PC-9 (cell line): ENCODE measurements at regions of chr3 and their contacts with region 1.

Region 1: GRCh38 chr3:97882975-97883598 is 61.3 kb downstream of the CRYBG3 start:
- DNase-seq: peak; percentile 74 to 91
- H3K4me3 ChIP-seq: peak overlapping the region; percentile 20; the same call in 1 of the 2 replicates
- H3K27ac ChIP-seq: peak overlapping the region; percentile 64
- H3K4me1 ChIP-seq: peaks cover 24% of the 10 kb centered on the region
- H3K27me3 ChIP-seq: no peaks in the 10 kb centered on the region
- CTCF ChIP-seq: no peak

Region 2: GRCh38 chr3:97863031-97863430 is 20.1 kb before region 1 on chr3:
- CTCF ChIA-PET with region 1: no interaction called
- POLR2A ChIA-PET with region 1: no interaction called
- intact Hi-C with region 1: loop called (anchors 2 kb)
- DNase-seq: peak; percentile 24 to 93
- H3K4me3 ChIP-seq: no peak overlapping the region
- H3K27ac ChIP-seq: peak overlapping the region; percentile 32
- H3K4me1 ChIP-seq: peaks cover 18% of the 10 kb centered on the region
- H3K27me3 ChIP-seq: no peaks in the 10 kb centered on the region
- CTCF ChIP-seq: no peak

Region 3: GRCh38 chr3:97871801-97872524 is 11.1 kb before region 1 on chr3:
- CTCF ChIA-PET with region 1: no interaction called
- POLR2A ChIA-PET with region 1: no interaction called
- intact Hi-C with region 1: loop called (anchors 1 kb)
- DNase-seq: peak; percentile 53 to 90
- H3K4me3 ChIP-seq: no peak overlapping the region
- H3K27ac ChIP-seq: 0 out of 2 replicates have a peak overlapping the region, but pooled peaks have one; percentile 2
- H3K4me1 ChIP-seq: no peaks in the 10 kb centered on the region
- H3K27me3 ChIP-seq: no peaks in the 10 kb centered on the region
- CTCF ChIP-seq: no peak

Region 4: DNA sequence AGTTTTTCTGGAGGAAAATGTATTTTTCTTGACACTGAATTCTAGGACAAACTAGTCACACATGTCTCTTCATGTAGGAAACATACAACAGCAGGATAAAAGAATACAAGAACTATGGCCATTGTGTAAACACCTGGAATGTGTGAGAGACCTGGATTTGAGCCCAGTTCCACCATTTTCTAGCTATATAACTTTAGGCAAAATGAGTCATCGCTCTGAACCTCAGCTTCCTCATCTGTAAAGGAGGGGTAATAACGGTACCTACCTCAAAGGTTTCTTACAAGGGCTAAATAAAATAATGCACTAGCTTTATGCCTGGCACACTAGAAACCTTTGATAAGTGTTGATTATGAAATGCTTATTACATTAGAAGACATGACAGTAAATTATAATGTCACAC is 31.3 kb after region 1 on chr3:
- CTCF ChIA-PET with region 1: no interaction called
- POLR2A ChIA-PET with region 1: no interaction called
- intact Hi-C with region 1: no loop called
- DNase-seq: peak; percentile 41 to 91
- H3K4me3 ChIP-seq: no peak overlapping the region
- H3K27ac ChIP-seq: no peak overlapping the region
- H3K4me1 ChIP-seq: peaks cover 26% of the 10 kb centered on the region
- H3K27me3 ChIP-seq: no peaks in the 10 kb centered on the region
- CTCF ChIP-seq: no peak

Region 5: GRCh38 chr3:97952280-97952679 is 69.2 kb after region 1 on chr3:
- CTCF ChIA-PET with region 1: no interaction called
- POLR2A ChIA-PET with region 1: no interaction called
- intact Hi-C with region 1: loop called (anchors 5 kb)
- DNase-seq: peak; percentile 26 to 93
- H3K4me3 ChIP-seq: peak overlapping the region; percentile 36
- H3K27ac ChIP-seq: peak overlapping the region; percentile 91
- H3K4me1 ChIP-seq: peaks cover 43% of the 10 kb centered on the region
- H3K27me3 ChIP-seq: no peaks in the 10 kb centered on the region
- CTCF ChIP-seq: no peak

Region 6: GRCh38 chr3:98109807-98110549 is 226.9 kb after region 1 on chr3:
- CTCF ChIA-PET with region 1: no interaction called
- POLR2A ChIA-PET with region 1: no interaction called
- intact Hi-C with region 1: no loop called
- DNase-seq: no peak
- H3K4me3 ChIP-seq: no peak overlapping the region
- H3K27ac ChIP-seq: no peak overlapping the region
- H3K4me1 ChIP-seq: no peaks in the 10 kb centered on the region
- H3K27me3 ChIP-seq: no peaks in the 10 kb centered on the region
- CTCF ChIP-seq: no peak